Aorta (tissue), 5 donors: ENCODE measurements at regions of chr11 and their contacts with region 1.

Region 1: GRCh38 chr11:35617687-35618496 is at the start of gene FJX1:
- DNase-seq: peak; percentile 62 to 83
- ATAC-seq: peak; percentile 66
- H3K4me3 ChIP-seq: peak within 1 kb of the TSS; percentile 27 to 59
- H3K27ac ChIP-seq: no peak within 1 kb of the TSS
- H3K4me1 ChIP-seq: no peaks in the 10 kb centered on the region
- H3K27me3 ChIP-seq: no peaks in the 10 kb centered on the region
- total RNA-seq, gene FJX1: 5.8 to 10.4 TPM

Region 2: DNA sequence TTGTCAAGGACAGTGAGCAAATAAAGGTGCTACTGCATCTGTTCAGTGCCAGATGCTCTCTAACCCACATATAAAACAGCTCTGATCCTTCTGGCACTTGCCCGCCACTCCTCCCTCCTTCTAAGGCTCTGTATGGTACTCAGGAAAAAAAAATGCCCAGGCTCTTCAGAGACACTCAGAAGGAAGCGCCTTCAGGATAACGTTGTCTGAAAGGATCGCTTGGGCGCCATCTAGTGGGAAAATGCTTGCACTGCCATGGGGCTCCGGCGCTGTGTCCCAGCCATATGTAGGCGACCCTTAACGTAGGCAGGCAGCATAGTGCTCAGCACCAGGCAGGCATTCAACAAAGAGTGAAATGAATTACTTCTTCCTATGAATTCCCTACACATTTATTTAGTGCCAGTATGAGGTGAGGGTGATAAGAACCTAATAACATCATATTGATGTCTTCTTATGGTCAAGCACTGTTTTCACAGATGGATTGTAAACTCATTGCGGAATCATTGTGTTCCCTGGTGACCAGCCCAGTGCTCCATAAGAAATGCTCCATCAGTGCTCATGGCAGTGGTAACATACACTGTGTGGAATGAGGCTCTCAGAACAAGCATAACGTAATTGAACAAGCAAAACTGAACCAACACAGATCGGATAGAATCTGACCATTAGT is 132.1 kb before region 1 on chr11:
- intact Hi-C with region 1: loop called in 1 of 2 experiments (anchors 10 kb)
- DNase-seq: peak; percentile 79 to 90
- ATAC-seq: peak; percentile 89
- H3K4me3 ChIP-seq: no peak overlapping the region
- H3K27ac ChIP-seq: no peak overlapping the region
- H3K4me1 ChIP-seq: peaks cover 0 to 2% of the 10 kb centered on the region in 2 donors
- H3K27me3 ChIP-seq: peaks cover 0 to 6% of the 10 kb centered on the region in 2 donors

Region 3: GRCh38 chr11:35629914-35630313 is 12.0 kb after region 1 on chr11:
- intact Hi-C with region 1: no loop called
- DNase-seq: peak in 1 of 2 donors; percentile 49
- ATAC-seq: no peak
- H3K4me3 ChIP-seq: no peak overlapping the region
- H3K27ac ChIP-seq: no peak overlapping the region
- H3K4me1 ChIP-seq: peaks cover 0 to 2% of the 10 kb centered on the region in 2 donors
- H3K27me3 ChIP-seq: peaks cover 0 to 2% of the 10 kb centered on the region in 2 donors

Region 4: DNA sequence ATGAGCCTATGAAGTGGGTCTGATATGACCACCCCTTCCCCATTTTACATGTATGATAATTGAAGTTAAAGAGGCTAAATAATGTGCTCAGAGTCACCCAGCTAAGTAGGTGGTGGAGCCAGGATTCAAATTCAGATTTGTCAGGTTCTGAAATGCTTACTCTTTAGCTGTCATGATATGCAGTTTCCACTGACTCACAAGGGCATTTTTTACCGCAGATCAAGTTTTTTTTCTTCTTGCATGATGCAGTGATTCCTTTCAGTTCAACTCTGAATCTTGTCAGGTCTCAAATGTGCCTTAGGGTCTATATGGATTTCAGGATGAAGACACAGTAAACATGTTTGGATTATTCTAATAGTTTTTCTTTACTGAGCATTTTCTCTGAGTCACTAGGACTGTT is 32.1 kb after region 1 on chr11:
- intact Hi-C with region 1: no loop called
- DNase-seq: no peak
- ATAC-seq: no peak
- H3K4me3 ChIP-seq: no peak overlapping the region
- H3K27ac ChIP-seq: no peak overlapping the region
- H3K4me1 ChIP-seq: peaks cover 0 to 1% of the 10 kb centered on the region in 2 donors
- H3K27me3 ChIP-seq: no peaks in the 10 kb centered on the region

Region 5: GRCh38 chr11:35662649-35663407 is 44.9 kb after region 1 on chr11 and contains the start of gene TRIM44:
- intact Hi-C with region 1: loop called (anchors 5 kb)
- DNase-seq: peak; percentile 91 to 94
- ATAC-seq: peak; percentile 95
- H3K4me3 ChIP-seq: peak within 1 kb of the TSS; percentile 65 to 86
- H3K27ac ChIP-seq: peak within 1 kb of the TSS; percentile 64 to 86
- H3K4me1 ChIP-seq: no peaks in the 10 kb centered on the region
- H3K27me3 ChIP-seq: no peaks in the 10 kb centered on the region
- total RNA-seq, gene TRIM44: 55.2 to 63.3 TPM

Region 6: DNA sequence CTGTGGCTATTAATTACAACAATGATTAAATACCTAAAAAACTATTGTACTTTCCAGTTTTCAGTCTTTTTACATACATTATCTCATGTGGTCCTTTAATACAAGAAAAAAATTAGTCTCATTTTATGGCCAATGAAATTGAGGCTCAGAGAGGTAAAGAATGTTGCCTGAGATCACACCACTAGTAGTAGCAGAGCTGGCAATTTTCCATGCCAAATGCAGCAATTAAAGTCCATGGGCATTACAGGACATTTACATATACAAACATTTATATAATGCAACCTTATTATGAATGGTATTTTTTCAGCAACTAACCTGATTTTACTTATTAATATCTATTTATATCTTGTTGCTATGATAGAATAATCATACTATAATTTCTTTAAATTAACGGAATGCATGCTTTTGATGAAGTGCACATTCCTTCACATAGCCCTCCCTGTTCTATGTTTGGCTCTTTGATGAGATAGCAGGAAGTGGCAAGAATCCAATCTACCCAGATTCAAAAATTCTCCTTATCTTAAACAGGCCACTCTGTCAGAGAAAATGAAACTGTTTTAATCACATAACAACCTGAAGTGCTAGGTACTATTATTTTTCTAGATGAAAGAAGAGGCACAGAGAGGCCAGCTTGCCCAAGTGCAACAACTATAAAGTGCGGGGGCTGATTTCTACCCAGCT is 205.1 kb after region 1 on chr11:
- intact Hi-C with region 1: loop called (anchors 5 to 10 kb)
- DNase-seq: no peak
- ATAC-seq: no peak
- H3K4me3 ChIP-seq: no peak overlapping the region
- H3K27ac ChIP-seq: no peak overlapping the region
- H3K4me1 ChIP-seq: no peaks in the 10 kb centered on the region
- H3K27me3 ChIP-seq: peaks cover 0 to 1% of the 10 kb centered on the region in 2 donors

Region 7: GRCh38 chr11:35943713-35944655 is 326.1 kb after region 1 on chr11 and contains the start of gene LDLRAD3:
- intact Hi-C with region 1: loop called in 1 of 2 experiments (anchors 10 kb)
- DNase-seq: peak; percentile 88 to 94
- ATAC-seq: peak; percentile 89
- H3K4me3 ChIP-seq: peak within 1 kb of the TSS; percentile 62 to 69
- H3K27ac ChIP-seq: peak within 1 kb of the TSS in 1 of 2 donors; percentile 8
- H3K4me1 ChIP-seq: no peaks in the 10 kb centered on the region
- H3K27me3 ChIP-seq: no peaks in the 10 kb centered on the region
- total RNA-seq, gene LDLRAD3: 16.2 to 19.6 TPM

Region 8: DNA sequence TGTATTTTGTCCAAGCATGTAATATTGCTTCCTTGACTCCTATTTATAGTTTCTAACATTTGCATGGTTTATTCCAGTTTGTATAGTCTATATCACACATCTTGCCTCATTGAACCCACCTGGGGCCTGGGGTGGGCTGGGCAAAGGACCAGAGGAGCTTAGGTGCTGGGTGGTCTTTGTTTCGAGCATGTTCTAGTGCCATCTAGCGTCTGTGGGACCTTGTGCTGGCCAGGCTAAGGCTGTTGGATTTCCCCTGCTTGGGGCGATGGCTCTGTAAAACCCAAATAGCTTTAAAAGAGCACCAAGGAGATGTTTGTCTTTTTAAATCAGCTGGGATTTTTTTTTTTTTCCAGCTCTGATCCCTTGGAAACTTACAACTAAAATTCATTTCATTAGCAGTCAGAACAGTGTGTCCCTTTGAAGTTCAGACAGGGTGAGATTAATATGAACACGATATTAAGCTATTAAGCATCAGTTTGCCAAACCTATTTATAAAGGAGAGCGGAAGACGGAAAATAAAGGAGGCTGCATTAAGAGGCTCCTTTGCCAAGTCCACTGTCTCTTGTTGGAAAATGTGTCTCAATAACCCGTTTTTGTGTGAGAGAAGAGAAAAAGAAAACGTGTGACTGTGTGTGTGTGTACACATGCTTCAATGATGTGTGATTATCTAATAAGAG is 514.0 kb after region 1 on chr11:
- intact Hi-C with region 1: loop called (anchors 2 to 5 kb)
- DNase-seq: peak in 1 of 2 donors; percentile 56
- ATAC-seq: peak; percentile 79
- H3K4me3 ChIP-seq: no peak overlapping the region
- H3K27ac ChIP-seq: no peak overlapping the region
- H3K4me1 ChIP-seq: no peaks in the 10 kb centered on the region
- H3K27me3 ChIP-seq: no peaks in the 10 kb centered on the region

Region 9: GRCh38 chr11:36265793-36266628 is 648.1 kb after region 1 on chr11:
- intact Hi-C with region 1: loop called (anchors 2 kb)
- DNase-seq: peak; percentile 58 to 80
- ATAC-seq: peak; percentile 62
- H3K4me3 ChIP-seq: no peak overlapping the region
- H3K27ac ChIP-seq: no peak overlapping the region
- H3K4me1 ChIP-seq: no peaks in the 10 kb centered on the region
- H3K27me3 ChIP-seq: no peaks in the 10 kb centered on the region